Left colon (tissue), 2 donors: ENCODE measurements at regions of chr19 and their contacts with region 1.

Region 1: DNA sequence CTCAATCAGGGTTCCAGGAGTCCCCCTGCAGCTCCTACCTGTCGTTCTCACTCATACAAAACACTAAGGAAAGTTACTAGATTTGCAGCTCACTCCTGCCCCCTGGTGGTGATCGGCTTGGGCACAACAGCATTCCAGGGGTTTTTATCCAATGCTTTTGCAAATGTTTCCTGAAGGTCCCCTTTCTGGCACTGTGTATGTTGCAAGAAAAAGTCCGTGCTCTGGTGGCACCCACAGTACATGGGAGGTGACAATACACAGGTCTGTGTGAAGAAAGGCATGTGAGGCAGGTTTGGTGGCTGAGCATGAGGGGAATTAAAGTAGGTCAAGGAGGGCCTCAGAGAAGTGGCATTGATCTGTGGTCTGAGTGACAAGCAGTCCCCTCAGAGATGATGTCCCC is 8.6 kb upstream of the TYK2 start:
- DNase-seq: peak; percentile 73 to 96
- ATAC-seq: peak; percentile 77

Region 2: DNA sequence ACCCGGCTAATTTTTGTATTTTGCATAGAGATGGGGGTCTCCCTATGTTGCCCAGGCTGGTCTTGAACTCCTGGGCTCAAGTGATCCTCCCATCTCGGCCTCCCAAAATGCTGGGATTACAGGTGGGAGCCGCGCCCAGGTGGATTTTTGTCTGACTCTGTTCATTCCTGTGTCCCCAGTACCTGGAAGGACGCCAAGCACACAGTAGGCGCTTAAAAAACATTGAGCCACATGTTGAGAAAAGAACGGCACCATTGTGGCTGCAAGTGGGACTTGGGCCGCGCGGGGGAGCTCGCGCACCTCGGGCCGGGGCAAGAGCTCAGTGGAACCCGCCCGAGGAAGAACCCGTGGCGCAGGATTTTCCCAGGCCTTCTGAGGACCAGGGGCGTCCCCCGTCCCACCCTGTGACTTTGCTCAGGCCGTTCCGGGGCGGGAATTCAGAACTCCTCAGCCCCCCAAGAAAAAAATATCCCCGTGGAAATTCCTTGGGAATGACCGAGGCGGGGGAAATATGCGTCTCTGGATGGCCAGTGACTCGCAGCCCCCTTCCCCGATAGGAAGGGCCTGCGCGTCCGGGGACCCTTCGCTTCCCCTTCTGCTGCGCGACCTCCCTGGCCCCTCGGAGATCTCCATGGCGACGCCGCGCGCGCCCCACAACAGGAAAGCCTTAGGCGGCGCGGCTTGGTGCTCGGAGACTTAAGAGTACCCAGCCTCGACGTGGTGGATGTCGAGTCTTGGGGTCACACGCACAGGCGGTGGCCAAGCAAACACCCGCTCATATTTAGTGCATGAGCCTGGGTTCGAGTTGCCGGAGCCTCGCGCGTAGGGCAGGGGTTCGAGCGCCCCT is 119.4 kb before region 1 on chr19:
- intact Hi-C with region 1: loop called (anchors 2 to 5 kb)
- DNase-seq: peak; percentile 77 to 90
- ATAC-seq: peak; percentile 84